Heart right ventricle (tissue), 16 donors: ENCODE measurements at regions of chr9 and their contacts with region 1.

Region 1: GRCh38 chr9:2620919-2621679 is 488 bp upstream of the VLDLR start:
- DNase-seq: peak; percentile 77 to 78
- ATAC-seq: peak; percentile 68 to 82 (median 80)
- H3K4me3 ChIP-seq: peak overlapping the region; percentile 56 to 90 (median 80)
- H3K27ac ChIP-seq: peak overlapping the region; percentile 88 to 97 (median 94)
- H3K4me1 ChIP-seq: peaks cover 2 to 47% (median 33%) of the 10 kb centered on the region in 9 donors
- H3K27me3 ChIP-seq: peaks cover 0 to 49% (median 0%) of the 10 kb centered on the region in 7 donors
- CTCF ChIP-seq: peak in 5 of 9 donors; percentile 14 to 44 (median 32)

Region 2: DNA sequence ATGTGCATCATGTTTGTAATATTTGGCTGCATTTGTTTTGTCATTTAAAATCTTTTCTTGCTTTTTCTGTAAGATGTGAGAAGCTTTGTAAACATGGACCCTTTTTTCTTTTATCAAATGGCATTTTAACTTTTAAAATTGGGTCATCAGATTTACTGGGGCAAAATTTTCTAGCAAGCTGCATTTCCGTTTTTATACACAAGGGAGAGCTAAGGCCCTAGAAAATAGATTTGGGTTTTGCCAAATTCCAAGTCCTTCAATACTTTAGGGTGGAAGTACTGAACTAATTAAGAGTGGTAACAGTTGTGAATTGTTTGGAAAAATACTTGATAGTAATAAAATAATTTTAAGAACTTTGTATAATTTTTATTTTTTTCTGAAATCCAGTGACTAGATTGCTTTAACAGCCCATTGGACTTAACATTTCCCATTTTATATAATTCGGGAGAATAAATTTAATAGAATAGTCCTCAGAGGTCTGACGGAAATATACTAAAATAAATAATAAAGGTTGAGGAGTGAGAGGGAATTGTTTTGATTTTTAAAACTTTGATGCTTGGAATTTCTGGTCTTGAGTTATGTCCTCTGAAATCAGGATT is 488.5 kb before region 1 on chr9:
- intact Hi-C with region 1: loop called in 3 of 10 experiments (anchors 10 kb)
- DNase-seq: no peak
- ATAC-seq: peak in 2 of 8 donors; percentile 26 to 37
- H3K4me3 ChIP-seq: no peak overlapping the region
- H3K27ac ChIP-seq: peak overlapping the region in 3 of 10 donors; percentile 0 to 6 (median 4)
- H3K4me1 ChIP-seq: peaks cover 5 to 63% (median 40%) of the 10 kb centered on the region in 9 donors
- H3K27me3 ChIP-seq: no peaks in the 10 kb centered on the region
- CTCF ChIP-seq: peak; percentile 61 to 86 (median 74)

Region 3: DNA sequence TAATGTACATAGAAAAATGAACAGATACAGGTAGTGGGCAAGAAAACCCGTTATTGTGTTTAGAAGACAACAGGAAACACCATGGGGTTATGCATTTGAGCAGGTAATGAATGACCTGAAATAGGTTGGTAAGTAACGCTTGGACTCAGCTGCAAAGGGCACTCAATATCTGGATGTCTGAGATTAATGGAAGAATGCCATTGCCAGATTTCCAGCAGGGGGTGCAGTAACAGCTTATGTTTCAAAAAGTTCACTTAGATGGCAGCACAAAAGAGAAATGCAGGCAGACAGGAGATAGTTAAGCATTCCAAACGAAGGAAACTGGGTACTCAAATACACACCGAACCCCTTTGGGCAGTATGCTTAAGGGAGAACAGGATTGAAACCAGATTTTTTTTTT is 285.0 kb before region 1 on chr9:
- intact Hi-C with region 1: loop called in 1 of 10 experiments (anchors 10 kb)
- DNase-seq: no peak
- ATAC-seq: no peak
- H3K4me3 ChIP-seq: no peak overlapping the region
- H3K27ac ChIP-seq: no peak overlapping the region
- H3K4me1 ChIP-seq: peaks cover 0 to 26% (median 7%) of the 10 kb centered on the region in 9 donors
- H3K27me3 ChIP-seq: no peaks in the 10 kb centered on the region
- CTCF ChIP-seq: peak in 6 of 9 donors; percentile 8 to 45 (median 30)

Region 4: DNA sequence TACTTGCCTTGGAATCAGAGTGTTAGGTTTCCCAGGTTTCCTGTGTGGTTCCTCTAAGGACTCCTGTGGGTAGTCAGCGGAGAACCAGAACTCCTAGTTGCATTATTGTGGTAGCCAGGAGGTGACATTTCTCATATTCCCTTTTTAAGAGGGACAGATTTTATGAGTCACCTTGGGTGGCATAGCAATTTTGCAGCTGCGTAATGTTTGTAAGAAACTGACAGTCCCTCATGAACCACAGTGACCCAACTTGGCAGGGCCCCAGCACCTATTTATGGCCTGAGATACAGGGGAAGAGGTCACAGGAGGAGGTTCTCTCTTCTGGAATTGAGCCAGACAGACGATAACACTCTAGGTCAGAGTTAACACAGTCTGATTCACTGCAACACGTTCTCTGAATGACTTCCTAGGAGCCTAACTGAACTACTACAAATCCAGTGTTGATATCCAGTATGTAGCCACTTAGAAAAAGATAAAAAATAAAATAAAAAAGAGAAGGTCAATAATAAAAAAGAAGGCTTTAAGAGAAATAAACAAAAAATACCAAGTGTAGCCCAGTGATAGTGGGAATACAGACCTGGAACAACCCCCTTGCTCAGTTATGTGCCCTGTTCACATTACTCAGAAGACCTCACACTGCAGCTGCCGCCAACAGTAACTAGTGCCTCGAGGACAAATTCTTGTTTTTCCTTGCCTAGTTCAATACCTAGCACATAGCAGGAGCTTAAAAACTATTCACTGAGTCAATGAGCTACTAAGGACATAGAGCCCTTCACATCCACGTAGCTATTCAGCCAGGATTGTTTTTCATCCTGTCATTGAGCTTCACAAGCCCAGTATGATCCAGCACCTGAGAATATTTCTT is 50.3 kb before region 1 on chr9:
- intact Hi-C with region 1: loop called in 7 of 10 experiments (anchors 2 to 10 kb)
- DNase-seq: peak; percentile 92 to 95
- ATAC-seq: peak; percentile 86 to 96 (median 94)
- H3K4me3 ChIP-seq: no peak overlapping the region
- H3K27ac ChIP-seq: peak overlapping the region in 9 of 10 donors; percentile 29 to 87 (median 85)
- H3K4me1 ChIP-seq: peaks cover 5 to 74% (median 23%) of the 10 kb centered on the region in 9 donors
- H3K27me3 ChIP-seq: no peaks in the 10 kb centered on the region
- CTCF ChIP-seq: peak in 3 of 9 donors; percentile 28 to 35 (median 31)

Region 5: GRCh38 chr9:2727966-2728613 is 107.0 kb after region 1 on chr9:
- intact Hi-C with region 1: loop called in 2 of 10 experiments (anchors 5 kb)
- DNase-seq: peak in 1 of 2 donors; percentile 69
- ATAC-seq: peak; percentile 46 to 89 (median 81)
- H3K4me3 ChIP-seq: no peak overlapping the region
- H3K27ac ChIP-seq: peak overlapping the region in 3 of 10 donors; percentile 12 to 41 (median 24)
- H3K4me1 ChIP-seq: peaks cover 0 to 26% (median 11%) of the 10 kb centered on the region in 9 donors
- H3K27me3 ChIP-seq: no peaks in the 10 kb centered on the region
- CTCF ChIP-seq: peak; percentile 36 to 85 (median 73)

Region 6: DNA sequence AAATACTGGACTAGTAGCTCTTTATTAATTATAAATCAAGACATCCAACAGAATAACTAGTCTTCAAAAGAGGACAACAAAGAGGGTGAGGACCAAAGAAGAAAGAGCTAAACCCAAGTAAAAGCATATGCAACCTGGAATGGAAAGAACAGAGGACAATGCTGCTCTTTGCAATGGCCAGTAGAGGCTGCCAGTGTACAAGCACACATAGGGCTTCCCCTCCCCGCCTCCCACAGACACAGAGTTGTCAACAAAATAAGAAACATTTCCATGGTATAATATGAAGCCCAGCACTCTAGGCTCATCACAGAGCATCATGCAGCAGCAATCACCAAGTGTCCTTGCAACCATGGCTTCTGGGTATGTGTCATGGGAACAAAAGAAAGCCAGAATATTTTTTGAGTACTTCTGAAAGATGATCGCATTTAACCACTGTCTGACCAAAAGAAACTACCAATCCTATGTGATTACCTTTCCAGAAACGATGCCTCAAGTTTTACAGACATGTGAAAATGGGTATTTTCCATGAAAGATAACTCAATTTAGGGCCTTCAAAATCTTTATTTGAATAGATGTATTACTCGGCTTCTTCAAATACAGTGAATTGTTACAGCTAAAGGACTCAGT is 846.6 kb after region 1 on chr9:
- intact Hi-C with region 1: no loop called
- DNase-seq: peak; percentile 14 to 62
- ATAC-seq: peak; percentile 78 to 94 (median 89)
- H3K4me3 ChIP-seq: no peak overlapping the region
- H3K27ac ChIP-seq: no peak overlapping the region
- H3K4me1 ChIP-seq: peaks cover 0 to 35% (median 21%) of the 10 kb centered on the region in 9 donors
- H3K27me3 ChIP-seq: no peaks in the 10 kb centered on the region
- CTCF ChIP-seq: peak; percentile 57 to 92 (median 80)